PC-3 (cell line): ENCODE measurements at regions of chr17 and their contacts with region 1.

Region 1: GRCh38 chr17:7435221-7435675 is at the start of gene TMEM102:
- DNase-seq: peak; percentile 96
- ATAC-seq: peak; percentile 77
- H3K4me3 ChIP-seq: peak within 1 kb of the TSS; percentile 71
- H3K27ac ChIP-seq: peak within 1 kb of the TSS; percentile 40
- H3K4me1 ChIP-seq: peaks cover 4% of the 10 kb centered on the region; the same call in 1 of the 2 replicates
- H3K27me3 ChIP-seq: no peaks in the 10 kb centered on the region
- CTCF ChIP-seq: no peak
- total RNA-seq, gene TMEM102: 14.0 and 17.9 TPM in 2 replicates

Region 2: DNA sequence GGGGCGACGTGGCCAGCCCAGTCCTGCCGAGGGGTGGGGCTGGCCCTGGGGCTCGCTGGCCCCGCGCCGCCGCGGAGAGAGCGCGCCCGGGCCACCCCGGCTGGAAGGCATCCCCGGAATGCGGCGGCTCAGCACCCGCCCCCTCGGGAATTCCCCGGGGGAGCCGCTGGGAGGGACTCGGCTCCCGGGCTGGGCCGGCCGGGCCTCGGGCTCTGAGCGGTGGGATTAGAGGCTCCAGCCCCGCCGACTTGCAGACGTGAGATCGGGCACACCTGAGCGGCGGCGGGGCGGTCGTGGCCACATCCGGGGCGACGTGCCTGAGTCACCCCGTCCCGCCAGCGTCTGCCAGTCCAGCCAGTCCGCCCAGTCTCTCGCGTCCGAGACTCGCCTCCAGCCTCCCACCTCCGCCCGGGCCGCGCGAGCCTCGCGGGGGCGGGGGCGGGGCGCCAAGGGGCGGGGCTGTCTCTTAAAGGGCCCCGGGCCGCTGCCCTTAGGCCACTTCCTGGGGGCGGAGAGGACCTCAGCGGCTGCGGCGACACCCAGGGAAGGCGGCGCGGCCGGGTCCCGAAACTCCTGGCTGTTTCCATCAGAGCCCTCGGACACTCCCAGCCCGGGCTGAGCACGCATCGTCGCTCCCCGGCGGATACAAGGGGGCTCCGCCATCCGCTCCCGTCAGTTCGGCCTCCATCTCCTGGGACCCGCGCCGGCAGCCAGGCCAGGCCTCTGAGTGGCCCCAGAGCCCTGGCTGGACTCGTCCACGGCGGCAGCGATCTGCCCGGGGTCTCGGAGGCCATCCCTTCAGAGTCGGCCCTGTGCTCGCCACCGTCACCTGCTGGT is 83.4 kb before region 1 on chr17 and contains the start of gene KCTD11:
- CTCF ChIA-PET with region 1: interaction called, 3 read pairs
- POLR2A ChIA-PET with region 1: no interaction called
- intact Hi-C with region 1: loop called (anchors 5 kb)
- DNase-seq: peak; percentile 92
- ATAC-seq: peak; percentile 79
- H3K4me3 ChIP-seq: peak within 1 kb of the TSS; percentile 87
- H3K27ac ChIP-seq: peak within 1 kb of the TSS; percentile 95
- H3K4me1 ChIP-seq: peaks cover 28% of the 10 kb centered on the region
- H3K27me3 ChIP-seq: no peaks in the 10 kb centered on the region
- CTCF ChIP-seq: no peak; the same call in 1 of the 2 replicates
- total RNA-seq, gene KCTD11: 7.0 and 7.6 TPM in 2 replicates

Region 3: DNA sequence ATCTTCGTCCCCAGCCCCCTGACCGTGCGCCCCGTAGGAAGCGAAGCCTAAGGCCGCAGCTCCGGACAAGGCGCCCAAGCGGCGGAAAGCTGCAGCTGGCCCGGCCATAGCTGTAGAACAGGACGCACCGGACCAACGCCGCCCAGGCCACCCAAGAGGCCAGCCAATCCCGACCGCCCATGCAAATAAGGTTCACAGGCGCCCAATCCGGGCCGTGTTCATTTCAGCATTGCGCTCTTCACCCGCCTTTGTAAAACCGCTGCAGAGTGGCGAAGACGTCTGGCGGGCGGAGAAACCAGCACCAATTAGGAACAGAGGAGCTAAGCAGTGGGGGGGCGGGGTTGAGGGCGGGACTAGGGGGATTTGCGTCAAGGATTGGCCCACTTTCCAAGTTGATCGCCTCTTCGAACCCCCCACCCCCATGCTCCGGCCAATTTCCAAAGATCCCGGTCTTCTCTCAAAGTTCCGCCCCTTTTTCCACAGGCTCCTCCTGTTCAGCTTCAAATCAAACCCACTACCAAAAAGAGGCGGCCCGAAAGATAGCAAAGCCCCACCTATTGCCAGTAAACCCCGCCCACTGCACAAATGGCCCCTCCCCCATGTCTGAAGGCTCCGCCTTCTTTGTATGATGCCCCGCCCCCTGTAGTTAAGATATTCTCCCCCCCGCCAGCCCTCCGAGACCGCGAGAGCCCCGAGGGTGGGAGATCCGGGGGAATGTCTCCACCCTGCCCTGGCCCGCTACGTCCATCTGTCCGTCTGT is 31.1 kb before region 1 on chr17 and contains the start of gene TMEM256:
- CTCF ChIA-PET with region 1: interaction called, 6 read pairs
- POLR2A ChIA-PET with region 1: interaction called, 6 read pairs
- intact Hi-C with region 1: loop called (anchors 1 kb)
- DNase-seq: peak; percentile 97
- ATAC-seq: peak; percentile 87
- H3K4me3 ChIP-seq: peak within 1 kb of the TSS; percentile 85
- H3K27ac ChIP-seq: 0 out of 2 replicates have a peak within 1 kb of the TSS, but pooled peaks have one; percentile 13
- H3K4me1 ChIP-seq: peaks cover 9% of the 10 kb centered on the region
- H3K27me3 ChIP-seq: no peaks in the 10 kb centered on the region
- CTCF ChIP-seq: no peak
- total RNA-seq, gene TMEM256: 56.6 and 82.4 TPM in 2 replicates

Region 4: DNA sequence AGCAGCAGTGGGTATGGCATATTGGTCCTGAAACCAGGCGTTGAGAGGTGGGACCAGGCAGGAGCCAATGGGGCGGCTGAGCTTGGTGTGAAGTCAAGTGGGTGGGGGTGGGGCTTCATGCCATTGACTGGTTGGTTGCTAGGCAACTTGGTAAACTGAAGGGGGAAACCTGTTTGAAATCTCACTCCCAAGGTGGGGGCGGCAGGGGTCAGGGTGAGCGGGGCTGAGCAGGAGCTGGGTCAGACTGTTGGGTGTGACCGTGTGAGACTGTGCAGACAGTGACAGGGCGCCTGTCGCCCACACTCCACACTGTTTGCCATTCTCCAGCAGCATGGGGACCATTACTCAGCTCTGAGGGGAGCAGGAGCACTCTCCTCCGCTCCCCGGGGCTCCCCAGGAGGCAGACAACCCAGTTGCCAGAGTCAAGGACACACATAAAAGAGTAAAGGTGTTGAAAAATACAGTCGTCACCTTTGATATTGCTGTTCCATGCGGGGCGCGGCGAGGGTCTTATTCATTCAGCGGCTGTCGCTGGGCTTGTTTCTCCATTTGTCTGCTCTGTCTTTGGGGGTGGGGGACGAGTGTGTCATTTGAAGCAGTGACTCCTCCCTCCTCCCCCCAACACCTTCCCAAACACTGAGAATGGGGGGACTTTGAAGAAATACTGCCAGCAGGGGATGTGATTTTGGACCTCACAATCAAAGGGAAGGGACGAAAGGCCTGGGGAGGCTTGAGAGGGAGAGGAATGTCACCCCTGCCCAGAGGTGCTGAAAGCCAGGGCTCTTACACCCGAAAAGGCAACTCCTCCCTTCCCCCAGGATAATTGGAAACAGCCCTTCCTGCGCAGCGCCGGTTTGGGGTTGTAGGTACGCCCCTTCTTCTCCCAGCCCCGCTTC is 268.6 kb after region 1 on chr17:
- CTCF ChIA-PET with region 1: no interaction called
- POLR2A ChIA-PET with region 1: no interaction called
- intact Hi-C with region 1: no loop called
- DNase-seq: no peak
- ATAC-seq: no peak; the same call in 1 of the 2 replicates
- H3K4me3 ChIP-seq: peak overlapping the region; percentile 70; the same call in 1 of the 2 replicates
- H3K27ac ChIP-seq: no peak overlapping the region
- H3K4me1 ChIP-seq: no peaks in the 10 kb centered on the region
- H3K27me3 ChIP-seq: no peaks in the 10 kb centered on the region
- CTCF ChIP-seq: no peak